GM18951 (cell line): ENCODE measurements at regions of chr7 and their contacts with region 1.

Region 1: DNA sequence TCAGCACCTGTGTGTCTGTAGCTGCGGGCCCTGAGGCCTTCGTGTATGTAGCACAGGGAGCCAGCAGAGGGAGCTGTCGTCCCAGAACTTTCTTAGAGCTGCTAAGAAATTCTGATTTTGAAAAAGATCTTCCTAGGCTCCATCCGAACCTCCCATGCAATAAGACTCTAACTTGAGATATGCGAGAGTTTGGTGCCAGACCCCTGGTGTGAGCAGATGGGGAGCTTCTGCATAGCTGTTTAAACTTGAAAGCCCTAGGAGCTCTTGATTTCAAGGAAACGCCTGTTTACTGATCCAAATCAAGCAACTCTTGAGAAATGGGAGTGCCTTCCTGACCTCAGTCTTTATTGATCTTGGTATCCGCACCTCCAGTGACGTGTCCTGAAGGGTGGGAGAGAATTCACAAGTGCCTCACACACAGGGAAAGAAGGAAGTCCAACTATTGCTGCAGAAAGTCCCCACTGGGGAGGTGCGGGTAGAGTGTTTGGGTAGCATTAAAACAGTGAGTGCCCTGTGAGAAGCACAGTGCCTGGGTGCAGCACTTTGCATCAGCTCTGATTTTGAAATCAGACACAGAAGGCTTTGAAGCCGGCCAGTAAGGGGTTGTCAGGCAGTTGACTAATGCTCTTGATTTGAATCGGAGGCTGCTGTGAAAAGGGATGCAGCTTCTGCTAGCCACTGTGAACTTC is 66.4 kb upstream of the STRIP2 start:
- POLR2A ChIP-seq: no peak

Region 2: DNA sequence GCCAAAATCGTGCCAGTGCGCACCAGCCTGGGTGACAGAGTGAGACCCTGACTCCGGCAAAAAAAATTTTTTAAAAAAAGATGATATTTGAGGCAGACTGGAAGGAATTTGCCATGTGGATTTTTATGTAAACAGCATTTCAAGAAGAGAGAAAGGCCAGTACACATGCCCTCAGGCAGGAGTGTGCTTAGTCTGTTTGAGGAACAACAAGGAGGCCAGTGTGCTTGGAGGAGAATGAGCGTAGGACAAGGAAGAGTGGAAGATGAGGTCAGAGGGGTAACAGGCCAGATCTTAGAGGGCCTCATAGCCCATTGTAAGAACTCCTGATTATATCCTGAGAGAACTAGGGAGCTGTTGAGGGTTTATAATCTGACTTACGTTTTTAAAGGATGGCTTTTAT is 49.2 kb after region 1 on chr7:
- in situ Hi-C with region 1: no loop called
- POLR2A ChIP-seq: no peak

Region 3: GRCh38 chr7:129635300-129636029 is 267.6 kb after region 1 on chr7:
- in situ Hi-C with region 1: loop called (anchors 25 kb)
- POLR2A ChIP-seq: no peak

Region 4: GRCh38 chr7:130084037-130084875 is 716.4 kb after region 1 on chr7:
- in situ Hi-C with region 1: no loop called
- POLR2A ChIP-seq: no peak